HEK293 (cell line): ENCODE measurements at regions of chr17 and their contacts with region 1.

Region 1: GRCh38 chr17:27601069-27601975 is 29.7 kb upstream of the LGALS9 start:
- H3K4me3 ChIP-seq: no peak overlapping the region
- H3K27ac ChIP-seq: no peak overlapping the region
- H3K4me1 ChIP-seq: no peaks in the 10 kb centered on the region
- CTCF ChIP-seq: peak; percentile 62

Region 2: GRCh38 chr17:27236717-27237315 is 364.5 kb before region 1 on chr17:
- CTCF ChIA-PET with region 1: interaction called, 208 read pairs
- POLR2A ChIA-PET with region 1: interaction called, 3 read pairs
- H3K4me3 ChIP-seq: no peak overlapping the region
- H3K27ac ChIP-seq: no peak overlapping the region
- H3K4me1 ChIP-seq: peaks cover 2% of the 10 kb centered on the region; the same call in 1 of the 2 replicates
- CTCF ChIP-seq: peak; percentile 47; the same call in 1 of the 2 replicates

Region 3: DNA sequence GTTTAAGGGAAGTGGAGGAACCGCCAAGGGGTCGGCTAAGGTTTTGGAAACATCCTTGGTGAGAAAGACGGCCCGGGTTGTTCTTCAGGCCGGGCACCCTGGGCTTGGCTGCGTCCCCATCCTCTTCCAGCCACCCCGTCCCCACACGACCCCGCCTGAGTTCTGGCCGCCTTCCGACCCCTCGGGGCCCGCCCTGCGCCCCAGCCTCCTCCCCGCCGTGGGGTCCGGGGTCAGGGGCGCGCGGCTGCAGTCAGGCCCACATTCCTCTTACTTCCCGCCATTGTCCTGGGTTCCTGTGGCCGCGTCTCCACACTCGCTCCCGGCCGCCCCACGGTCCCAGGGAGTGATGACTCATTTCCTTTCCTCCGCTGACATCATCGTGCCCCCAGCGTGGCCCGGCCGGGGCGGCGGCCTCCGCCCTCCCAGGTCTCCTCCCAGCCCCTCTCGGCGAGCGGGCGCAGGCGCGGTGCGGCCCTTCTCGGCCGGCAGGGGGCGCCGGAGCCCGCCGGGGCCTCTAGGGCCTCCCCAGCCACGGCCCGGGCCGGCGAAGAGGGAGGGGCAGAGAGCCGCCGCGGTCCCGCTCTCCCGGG is 247.8 kb before region 1 on chr17:
- CTCF ChIA-PET with region 1: interaction called, 115 read pairs
- POLR2A ChIA-PET with region 1: interaction called, 3 read pairs
- H3K4me3 ChIP-seq: peak overlapping the region; percentile 79
- H3K27ac ChIP-seq: peak overlapping the region; percentile 85
- H3K4me1 ChIP-seq: no peaks in the 10 kb centered on the region; the same call in 1 of the 2 replicates
- CTCF ChIP-seq: 0 out of 2 replicates have a peak, but pooled peaks have one; percentile 9

Region 4: GRCh38 chr17:27430882-27431491 is 170.3 kb before region 1 on chr17:
- CTCF ChIA-PET with region 1: interaction called, 18 read pairs
- POLR2A ChIA-PET with region 1: no interaction called
- H3K4me3 ChIP-seq: no peak overlapping the region
- H3K27ac ChIP-seq: no peak overlapping the region
- H3K4me1 ChIP-seq: no peaks in the 10 kb centered on the region
- CTCF ChIP-seq: peak; percentile 56

Region 5: DNA sequence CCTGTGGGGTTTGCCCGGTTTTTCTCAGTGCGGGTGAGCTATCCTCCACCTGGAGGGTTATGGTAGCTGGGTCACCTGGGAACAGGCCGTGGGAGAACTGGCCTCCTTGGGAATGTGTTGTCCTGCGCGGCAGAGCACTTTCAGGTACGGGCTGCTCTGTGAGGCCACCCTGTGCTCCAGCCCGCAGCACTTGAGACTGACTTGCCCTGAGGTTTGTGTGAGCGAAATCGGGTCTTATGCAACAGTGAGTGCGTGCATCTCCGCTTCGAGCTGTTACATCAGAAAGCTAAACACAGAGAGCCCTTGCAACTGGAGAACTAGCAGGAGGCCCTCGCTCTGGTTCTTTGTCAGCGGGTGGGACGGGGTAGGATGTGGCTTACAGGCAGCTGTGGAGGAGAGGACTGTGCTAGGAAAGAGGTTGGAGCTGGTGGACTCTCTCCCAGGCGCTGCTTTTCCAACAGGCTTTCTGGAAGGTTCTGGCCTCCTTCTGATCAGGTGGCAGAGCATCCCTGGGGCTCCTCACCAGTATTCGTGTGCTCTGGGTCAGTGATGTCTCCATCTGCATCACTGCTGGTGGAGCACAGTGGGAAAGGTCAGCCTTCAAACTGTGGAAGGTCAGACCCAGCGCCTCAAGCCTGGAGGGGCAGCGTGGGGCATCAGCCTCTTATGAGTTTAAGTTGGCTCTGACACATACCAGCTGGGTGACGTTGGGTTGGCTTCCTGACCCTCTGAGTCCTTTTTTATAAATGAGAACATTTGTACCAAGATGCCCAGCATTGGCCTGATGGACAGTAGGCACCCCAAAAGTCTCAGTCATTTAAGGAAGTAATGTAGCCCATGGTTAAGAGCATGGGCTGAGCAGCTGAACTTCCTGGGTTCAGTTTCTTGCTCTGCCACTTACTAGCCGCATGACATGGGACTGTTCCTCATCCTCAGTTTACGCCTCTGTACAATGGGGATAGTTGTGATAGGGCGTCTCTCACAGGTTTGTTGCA is 68.8 kb before region 1 on chr17:
- CTCF ChIA-PET with region 1: interaction called, 27 read pairs
- POLR2A ChIA-PET with region 1: no interaction called
- H3K4me3 ChIP-seq: no peak overlapping the region
- H3K27ac ChIP-seq: no peak overlapping the region; the same call in 1 of the 2 replicates
- H3K4me1 ChIP-seq: peaks cover 23% of the 10 kb centered on the region
- CTCF ChIP-seq: no peak

Region 6: GRCh38 chr17:27578718-27579085 is 22.6 kb before region 1 on chr17:
- CTCF ChIA-PET with region 1: interaction called, 73 read pairs
- POLR2A ChIA-PET with region 1: interaction called, 4 read pairs
- H3K4me3 ChIP-seq: no peak overlapping the region
- H3K27ac ChIP-seq: no peak overlapping the region
- H3K4me1 ChIP-seq: peaks cover 13% of the 10 kb centered on the region
- CTCF ChIP-seq: no peak

Region 7: GRCh38 chr17:27760069-27760885 is 159.0 kb after region 1 on chr17:
- CTCF ChIA-PET with region 1: interaction called, 46 read pairs
- POLR2A ChIA-PET with region 1: no interaction called
- H3K4me3 ChIP-seq: no peak overlapping the region
- H3K27ac ChIP-seq: no peak overlapping the region
- H3K4me1 ChIP-seq: no peaks in the 10 kb centered on the region
- CTCF ChIP-seq: peak; percentile 87